Activated CD4-positive, alpha-beta T cell treated with anti-CD3 and anti-CD28 coated beads for 36 hours (primary cell): ENCODE measurements at regions of chr1 and their contacts with region 1.

Region 1: GRCh38 chr1:186212544-186213226 is 162.4 kb downstream of the TPR start:
- DNase-seq: peak; percentile 31
- ATAC-seq: peak; percentile 55
- H3K4me3 Mint-ChIP-seq: no peak overlapping the region
- H3K27ac Mint-ChIP-seq: no peak overlapping the region
- H3K4me1 Mint-ChIP-seq: no peaks in the 10 kb centered on the region
- H3K27me3 Mint-ChIP-seq: peaks cover 33% of the 10 kb centered on the region

Region 2: GRCh38 chr1:185483664-185484450 is 728.8 kb before region 1 on chr1:
- CTCF ChIA-PET with region 1: no interaction called
- POLR2A ChIA-PET with region 1: no interaction called
- intact Hi-C with region 1: no loop called
- DNase-seq: no peak
- ATAC-seq: no peak
- H3K4me3 Mint-ChIP-seq: no peak overlapping the region
- H3K27ac Mint-ChIP-seq: no peak overlapping the region
- H3K4me1 Mint-ChIP-seq: no peaks in the 10 kb centered on the region
- H3K27me3 Mint-ChIP-seq: no peaks in the 10 kb centered on the region

Region 3: DNA sequence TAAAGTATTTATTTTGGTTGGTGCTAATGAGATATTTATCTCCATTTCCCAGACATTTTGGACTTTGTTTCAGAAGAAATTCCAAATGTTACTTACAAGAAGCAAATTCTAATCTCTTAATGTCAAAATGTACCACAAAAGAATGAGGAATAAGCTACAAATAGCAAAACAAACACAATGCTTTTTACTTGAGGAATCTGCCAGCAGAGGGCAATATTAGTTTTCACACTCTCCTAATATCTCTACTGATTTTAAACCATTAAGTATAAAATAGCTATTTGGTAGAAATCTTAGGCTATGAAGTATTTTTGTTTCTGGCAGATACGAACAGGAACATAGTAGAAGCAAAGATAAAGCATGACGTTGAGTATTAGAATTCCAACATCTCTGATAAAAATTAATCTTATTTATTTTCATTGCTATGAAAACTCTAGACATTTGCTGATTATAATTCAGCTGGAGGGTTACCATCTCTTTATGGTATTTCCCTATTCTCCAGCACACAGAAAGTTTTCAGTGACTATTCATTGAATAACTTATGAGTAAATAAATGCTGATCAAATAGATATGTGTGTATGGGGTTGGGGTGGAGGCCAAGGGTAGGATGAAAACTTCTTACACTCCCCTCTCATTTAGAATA is 491.9 kb before region 1 on chr1:
- CTCF ChIA-PET with region 1: interaction called, 4 read pairs
- POLR2A ChIA-PET with region 1: no interaction called
- intact Hi-C with region 1: loop called (anchors 2 to 5 kb)
- DNase-seq: no peak
- ATAC-seq: no peak
- H3K4me3 Mint-ChIP-seq: no peak overlapping the region
- H3K27ac Mint-ChIP-seq: no peak overlapping the region
- H3K4me1 Mint-ChIP-seq: no peaks in the 10 kb centered on the region
- H3K27me3 Mint-ChIP-seq: peaks cover 5% of the 10 kb centered on the region

Region 4: GRCh38 chr1:185813401-185813979 is 399.2 kb before region 1 on chr1:
- CTCF ChIA-PET with region 1: no interaction called
- POLR2A ChIA-PET with region 1: no interaction called
- intact Hi-C with region 1: loop called (anchors 1 kb)
- DNase-seq: peak; percentile 8
- ATAC-seq: peak; percentile 60
- H3K4me3 Mint-ChIP-seq: no peak overlapping the region
- H3K27ac Mint-ChIP-seq: no peak overlapping the region
- H3K4me1 Mint-ChIP-seq: no peaks in the 10 kb centered on the region
- H3K27me3 Mint-ChIP-seq: no peaks in the 10 kb centered on the region

Region 5: DNA sequence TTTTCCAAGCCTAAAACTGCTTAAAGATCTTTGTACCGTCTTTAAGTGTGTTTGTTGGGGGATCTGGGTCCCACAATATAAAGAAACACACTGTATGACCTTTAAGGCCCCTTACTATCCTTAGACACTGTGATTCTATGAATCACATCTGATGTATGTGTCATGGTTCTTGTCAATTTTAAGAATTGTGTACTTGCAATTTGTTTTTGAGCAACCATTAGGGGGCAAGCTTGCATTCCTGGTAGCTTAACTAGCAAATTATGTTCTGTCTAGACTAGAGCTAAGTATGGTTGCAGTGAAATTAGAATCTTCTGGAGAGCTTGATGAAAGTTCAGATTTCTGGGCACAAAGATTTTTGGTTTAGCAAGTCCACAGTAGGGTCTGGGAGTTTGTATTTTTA is 57.1 kb before region 1 on chr1:
- CTCF ChIA-PET with region 1: interaction called, 3 read pairs
- POLR2A ChIA-PET with region 1: no interaction called
- intact Hi-C with region 1: loop called (anchors 1 kb)
- DNase-seq: peak; percentile 15
- ATAC-seq: peak; percentile 79
- H3K4me3 Mint-ChIP-seq: no peak overlapping the region
- H3K27ac Mint-ChIP-seq: no peak overlapping the region
- H3K4me1 Mint-ChIP-seq: no peaks in the 10 kb centered on the region
- H3K27me3 Mint-ChIP-seq: no peaks in the 10 kb centered on the region

Region 6: DNA sequence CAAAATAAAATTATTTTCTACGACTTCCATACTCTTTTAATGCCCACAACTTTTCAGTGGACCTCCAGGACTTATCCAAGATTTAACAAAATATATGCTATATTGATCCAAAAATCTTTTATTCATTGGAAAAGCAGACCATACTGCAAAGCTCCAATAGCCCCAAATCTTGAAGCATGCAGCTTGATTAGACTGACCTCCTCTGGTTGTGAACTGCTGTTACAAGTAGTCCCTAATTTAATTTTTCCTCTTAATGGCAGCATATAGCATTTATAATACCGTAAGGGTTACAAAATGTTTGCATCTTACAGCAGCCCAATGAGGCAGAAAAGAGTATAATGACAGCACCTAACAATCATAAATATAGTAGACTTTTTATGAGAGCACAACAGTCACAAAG is 112.6 kb after region 1 on chr1:
- CTCF ChIA-PET with region 1: no interaction called
- POLR2A ChIA-PET with region 1: no interaction called
- intact Hi-C with region 1: no loop called
- DNase-seq: no peak
- ATAC-seq: no peak
- H3K4me3 Mint-ChIP-seq: no peak overlapping the region
- H3K27ac Mint-ChIP-seq: no peak overlapping the region
- H3K4me1 Mint-ChIP-seq: peaks cover 14% of the 10 kb centered on the region
- H3K27me3 Mint-ChIP-seq: no peaks in the 10 kb centered on the region